Naive thymus-derived CD4-positive, alpha-beta T cell (primary cell): ENCODE measurements at regions of chr13 and their contacts with region 1.

Region 1: GRCh38 chr13:50936679-50937078 is 27.1 kb downstream of the RNASEH2B start:
- DNase-seq: no peak
- ATAC-seq: peak; percentile 49
- H3K4me3 ChIP-seq: no peak overlapping the region
- H3K4me3 Mint-ChIP-seq: no peak overlapping the region
- H3K27ac ChIP-seq: no peak overlapping the region
- H3K27ac Mint-ChIP-seq: peak overlapping the region in 1 of 9 donors; percentile 1
- H3K4me1 ChIP-seq: no peaks in the 10 kb centered on the region
- H3K4me1 Mint-ChIP-seq: peaks cover 0 to 13% (median 8%) of the 10 kb centered on the region in 7 donors
- H3K27me3 ChIP-seq: no peaks in the 10 kb centered on the region
- H3K27me3 Mint-ChIP-seq: no peaks in the 10 kb centered on the region

Region 2: GRCh38 chr13:50923272-50923671 is 13.4 kb before region 1 on chr13:
- CTCF ChIA-PET with region 1: no interaction called
- POLR2A ChIA-PET with region 1: no interaction called
- intact Hi-C with region 1: loop called in 1 of 2 experiments (anchors 2 kb)
- DNase-seq: no peak
- ATAC-seq: no peak
- H3K4me3 ChIP-seq: no peak overlapping the region
- H3K4me3 Mint-ChIP-seq: no peak overlapping the region
- H3K27ac ChIP-seq: no peak overlapping the region
- H3K27ac Mint-ChIP-seq: no peak overlapping the region
- H3K4me1 ChIP-seq: peaks cover 0 to 4% of the 10 kb centered on the region in 2 donors
- H3K4me1 Mint-ChIP-seq: peaks cover 20 to 59% (median 51%) of the 10 kb centered on the region in 7 donors
- H3K27me3 ChIP-seq: no peaks in the 10 kb centered on the region
- H3K27me3 Mint-ChIP-seq: no peaks in the 10 kb centered on the region

Region 3: GRCh38 chr13:52070929-52071523 is 1134.3 kb after region 1 on chr13:
- CTCF ChIA-PET with region 1: no interaction called
- POLR2A ChIA-PET with region 1: no interaction called
- intact Hi-C with region 1: no loop called
- DNase-seq: peak in 1 of 9 donors; percentile 1
- ATAC-seq: no peak
- H3K4me3 ChIP-seq: no peak overlapping the region
- H3K4me3 Mint-ChIP-seq: no peak overlapping the region
- H3K27ac ChIP-seq: no peak overlapping the region
- H3K27ac Mint-ChIP-seq: no peak overlapping the region
- H3K4me1 ChIP-seq: no peaks in the 10 kb centered on the region
- H3K4me1 Mint-ChIP-seq: peaks cover 0 to 14% (median 0%) of the 10 kb centered on the region in 7 donors
- H3K27me3 ChIP-seq: no peaks in the 10 kb centered on the region
- H3K27me3 Mint-ChIP-seq: peaks cover 25 to 41% (median 27%) of the 10 kb centered on the region in 5 donors